BJ (cell line): ENCODE measurements at regions of chr17 and their contacts with region 1.

Region 1: GRCh38 chr17:38982858-38983746 is 15.9 kb upstream of the FBXO47 start:
- DNase-seq: no peak
- H3K4me3 ChIP-seq: no peak overlapping the region
- H3K27me3 ChIP-seq: no peaks in the 10 kb centered on the region
- CTCF ChIP-seq: peak; percentile 80

Region 2: GRCh38 chr17:38994026-38994425 is 10.9 kb after region 1 on chr17:
- CTCF ChIA-PET with region 1: interaction called, 15 read pairs
- POLR2A ChIA-PET with region 1: no interaction called
- DNase-seq: no peak
- H3K4me3 ChIP-seq: no peak overlapping the region
- H3K27me3 ChIP-seq: 0 out of 2 replicates have a peak, but pooled peaks cover 1% of the 10 kb centered on the region
- CTCF ChIP-seq: no peak

Region 3: DNA sequence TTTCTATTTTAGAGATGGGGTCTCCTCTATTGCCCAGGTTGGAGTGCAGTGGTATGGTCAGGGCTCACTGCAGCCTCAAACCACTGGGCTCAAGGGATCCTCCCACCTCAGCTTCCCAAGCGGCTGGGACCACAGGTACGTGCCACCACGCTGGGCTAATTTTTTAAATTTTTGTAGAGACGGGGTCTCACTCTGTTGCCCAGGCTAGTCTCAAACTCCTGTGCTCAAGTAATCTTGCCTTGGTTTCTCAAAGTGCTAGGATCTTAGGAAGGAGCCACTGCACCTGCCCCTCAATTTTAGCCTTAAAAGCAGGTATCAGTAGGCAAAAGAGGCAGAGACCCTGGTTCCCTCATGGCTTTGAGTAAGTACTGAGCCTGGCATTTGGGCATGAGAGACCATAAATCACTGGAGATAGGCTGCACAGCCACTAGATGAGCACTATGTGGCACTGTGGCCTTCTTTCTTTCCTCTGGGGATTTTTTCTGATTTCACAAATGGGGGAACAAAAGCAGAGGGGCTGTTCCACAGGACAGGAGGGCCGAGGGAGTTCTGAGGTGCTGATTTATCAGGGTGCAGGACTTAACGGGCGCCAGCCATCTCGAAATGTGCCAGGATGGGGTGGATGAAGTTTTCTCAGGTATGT is 86.1 kb after region 1 on chr17:
- CTCF ChIA-PET with region 1: interaction called, 23 read pairs
- POLR2A ChIA-PET with region 1: no interaction called
- DNase-seq: no peak
- H3K4me3 ChIP-seq: no peak overlapping the region
- H3K27me3 ChIP-seq: peaks cover 3% of the 10 kb centered on the region; the same call in 1 of the 2 replicates
- CTCF ChIP-seq: peak; percentile 72

Region 4: GRCh38 chr17:39174907-39175694 is 192.0 kb after region 1 on chr17:
- CTCF ChIA-PET with region 1: interaction called, 32 read pairs
- POLR2A ChIA-PET with region 1: interaction called, 8 read pairs
- DNase-seq: no peak
- H3K4me3 ChIP-seq: no peak overlapping the region
- H3K27me3 ChIP-seq: no peaks in the 10 kb centered on the region
- CTCF ChIP-seq: peak; percentile 87

Region 5: DNA sequence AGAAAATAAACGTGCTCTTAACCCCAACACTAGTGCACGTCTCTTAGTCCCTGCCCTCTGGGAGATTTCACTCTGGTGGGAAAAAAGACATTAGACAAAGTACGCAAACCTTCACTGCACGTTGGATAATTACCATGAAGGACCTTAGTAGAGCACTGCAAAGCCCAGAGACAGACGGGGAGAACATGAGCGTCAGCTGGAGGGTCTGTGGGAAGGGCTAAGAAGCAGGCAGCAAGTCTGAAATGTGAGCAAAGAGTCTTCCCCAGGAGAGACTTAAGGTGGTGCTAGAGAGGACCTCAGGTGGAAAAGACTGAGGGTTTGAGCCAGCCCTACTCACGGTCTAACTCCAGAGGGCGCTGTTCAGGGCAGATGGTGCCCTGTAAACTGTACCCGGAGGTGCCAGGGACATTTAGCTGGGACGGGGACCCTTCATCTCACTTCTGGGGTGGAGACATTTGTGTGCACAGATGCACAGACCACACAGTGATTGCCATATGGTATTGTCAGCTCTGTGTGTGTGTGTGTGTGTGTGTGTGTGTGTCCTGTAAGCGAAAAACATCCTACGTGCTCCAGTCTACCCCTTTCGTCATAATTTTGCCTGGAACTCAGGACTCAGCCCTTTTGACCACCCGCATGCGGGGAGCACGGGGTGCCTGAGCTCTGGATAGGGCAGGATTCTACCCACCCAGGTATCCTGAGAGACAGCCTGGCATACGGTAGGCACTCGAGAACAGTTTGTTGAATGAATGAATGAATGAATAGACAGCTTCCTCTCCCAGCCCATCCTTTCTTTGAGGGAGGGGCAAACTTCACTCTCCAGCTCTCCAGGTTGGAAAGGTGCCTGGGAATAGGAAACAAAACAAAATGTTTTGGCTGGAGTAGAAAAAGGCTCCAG is 252.7 kb after region 1 on chr17:
- CTCF ChIA-PET with region 1: interaction called, 14 read pairs
- POLR2A ChIA-PET with region 1: no interaction called
- DNase-seq: no peak
- H3K4me3 ChIP-seq: no peak overlapping the region
- H3K27me3 ChIP-seq: peaks cover 2% of the 10 kb centered on the region; the same call in 1 of the 2 replicates
- CTCF ChIP-seq: peak; percentile 71

Region 6: GRCh38 chr17:39244600-39245570 is 261.8 kb after region 1 on chr17:
- CTCF ChIA-PET with region 1: interaction called, 17 read pairs
- POLR2A ChIA-PET with region 1: no interaction called
- DNase-seq: no peak
- H3K4me3 ChIP-seq: no peak overlapping the region
- H3K27me3 ChIP-seq: no peaks in the 10 kb centered on the region
- CTCF ChIP-seq: peak; percentile 97